PC-9 (cell line): ENCODE measurements at regions of chr14 and their contacts with region 1.

Region 1: DNA sequence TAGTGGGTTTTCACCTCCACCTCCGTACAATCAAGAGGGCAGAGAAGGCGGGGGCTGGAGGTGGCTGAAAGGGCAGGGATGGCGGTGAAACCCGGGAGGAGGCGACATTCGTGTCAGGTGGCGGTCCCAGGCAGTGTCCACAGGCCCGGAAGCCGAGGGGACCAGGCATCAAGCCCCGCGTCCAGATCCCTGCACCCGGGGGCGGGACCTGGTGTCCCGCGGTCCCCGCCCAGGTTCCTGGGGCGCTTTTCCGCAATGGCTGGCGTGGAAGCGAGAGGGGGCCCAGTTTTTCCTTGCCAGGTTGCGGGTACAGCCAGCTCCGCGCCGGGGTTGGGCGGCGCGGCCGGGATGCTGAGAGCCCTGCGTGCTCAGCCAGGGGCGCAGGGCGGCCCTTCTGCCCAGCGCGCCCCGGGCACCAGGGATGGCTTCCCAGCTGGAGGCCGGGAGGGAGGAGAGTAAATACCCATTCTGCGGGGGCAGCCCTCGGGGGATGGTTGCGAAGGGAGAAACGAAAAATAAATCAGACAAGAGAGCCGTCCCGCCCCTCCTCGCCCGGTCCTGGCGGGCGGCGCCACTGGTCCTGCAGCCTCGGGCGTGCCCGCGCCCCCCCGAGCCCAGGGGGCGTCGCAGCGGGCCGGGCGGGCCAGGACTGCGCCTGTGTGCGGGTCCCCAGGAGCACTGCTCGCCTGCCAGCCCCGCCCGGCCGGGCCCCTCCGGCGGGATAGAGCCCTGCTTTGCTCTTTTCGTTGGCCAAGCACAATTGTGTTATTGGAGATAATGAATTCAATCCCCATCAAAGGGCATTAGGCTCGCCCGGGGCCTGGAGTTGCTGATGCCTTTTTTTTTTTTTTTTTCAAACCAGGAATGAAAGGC is 11.5 kb downstream of the FOXA1 start:
- DNase-seq: peak in 1 of 2 experiments; percentile 67
- H3K4me3 ChIP-seq: peak overlapping the region; percentile 71
- H3K27ac ChIP-seq: peak overlapping the region; percentile 94
- H3K4me1 ChIP-seq: peaks cover 63% of the 10 kb centered on the region
- H3K27me3 ChIP-seq: no peaks in the 10 kb centered on the region
- CTCF ChIP-seq: no peak

Region 2: DNA sequence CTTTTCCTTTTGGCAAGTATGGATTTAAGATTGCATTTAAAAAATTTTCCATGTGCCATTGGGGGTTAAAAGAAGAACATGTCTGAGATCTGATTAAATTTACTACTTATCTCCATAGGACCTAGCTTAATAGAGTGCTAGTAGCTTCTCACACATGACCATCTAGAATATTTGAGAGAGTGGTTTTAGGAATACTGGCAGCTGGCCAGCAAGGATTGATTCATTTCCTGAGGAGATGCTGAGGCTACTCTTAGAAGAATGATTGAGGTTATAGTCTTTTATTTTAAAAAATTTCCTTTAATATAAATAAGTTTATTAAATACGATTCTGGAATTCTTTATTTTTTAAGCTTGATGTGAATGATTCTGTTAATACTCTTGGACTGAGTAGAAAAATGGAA is 329.7 kb before region 1 on chr14:
- CTCF ChIA-PET with region 1: interaction called, 7 read pairs
- POLR2A ChIA-PET with region 1: interaction called, 14 read pairs
- intact Hi-C with region 1: no loop called
- DNase-seq: peak in 1 of 2 experiments; percentile 9
- H3K4me3 ChIP-seq: no peak overlapping the region
- H3K27ac ChIP-seq: no peak overlapping the region
- H3K4me1 ChIP-seq: no peaks in the 10 kb centered on the region
- H3K27me3 ChIP-seq: no peaks in the 10 kb centered on the region
- CTCF ChIP-seq: no peak

Region 3: DNA sequence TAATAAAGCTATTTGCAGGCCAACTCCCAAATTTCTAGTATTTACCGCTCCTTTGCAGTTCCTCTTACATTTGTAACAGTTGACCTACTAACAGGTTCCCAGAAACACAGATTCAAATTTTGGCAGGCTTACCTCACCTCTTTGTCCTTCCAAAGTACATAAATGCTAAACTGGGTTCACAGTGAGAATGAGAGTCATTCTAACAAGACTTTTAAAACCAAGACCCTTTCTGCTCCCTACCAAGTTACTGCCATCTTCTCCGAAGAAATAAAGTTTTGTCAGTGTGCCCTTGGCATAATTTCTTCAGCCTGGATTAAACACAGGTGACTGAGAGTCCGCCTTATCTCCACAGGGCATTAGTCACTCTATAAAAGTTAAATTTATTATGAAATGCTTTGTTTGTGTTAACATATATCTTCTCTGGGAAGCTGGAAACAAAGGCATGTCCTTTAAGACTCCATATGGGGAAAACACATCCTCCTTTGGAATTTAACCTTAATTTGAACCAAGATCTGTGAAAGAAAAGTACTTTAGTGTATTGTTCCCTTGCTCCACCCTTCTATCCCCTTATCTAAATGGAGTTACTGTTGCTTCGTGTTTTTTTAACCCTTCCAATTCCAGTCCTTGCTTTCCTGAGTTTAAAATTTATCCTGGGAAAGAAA is 16.7 kb before region 1 on chr14:
- CTCF ChIA-PET with region 1: no interaction called
- POLR2A ChIA-PET with region 1: no interaction called
- intact Hi-C with region 1: loop called (anchors 1 kb)
- DNase-seq: peak in 1 of 2 experiments; percentile 96
- H3K4me3 ChIP-seq: peak overlapping the region; percentile 59
- H3K27ac ChIP-seq: peak overlapping the region; percentile 92
- H3K4me1 ChIP-seq: peaks cover 40% of the 10 kb centered on the region
- H3K27me3 ChIP-seq: no peaks in the 10 kb centered on the region
- CTCF ChIP-seq: no peak

Region 4: DNA sequence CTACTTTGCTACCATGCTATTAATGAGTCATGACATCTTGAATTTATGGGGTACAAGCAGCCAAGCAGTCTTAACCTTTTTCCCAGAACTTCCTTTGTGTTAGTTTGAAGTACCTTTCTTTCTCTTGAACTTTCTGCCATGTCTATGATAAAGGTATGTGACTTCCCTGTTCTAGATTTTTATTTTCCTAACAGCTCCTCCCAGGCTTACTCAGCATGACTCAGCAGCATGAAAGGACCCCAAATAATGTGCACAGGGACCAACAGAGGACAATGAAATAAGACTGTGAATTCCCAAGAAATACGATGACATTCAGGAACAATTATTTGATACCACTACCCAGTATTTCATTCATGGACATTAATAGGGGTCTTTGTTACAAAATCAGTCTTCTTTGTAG is 71.8 kb after region 1 on chr14:
- CTCF ChIA-PET with region 1: no interaction called
- POLR2A ChIA-PET with region 1: no interaction called
- intact Hi-C with region 1: no loop called
- DNase-seq: peak; percentile 5 to 35
- H3K4me3 ChIP-seq: no peak overlapping the region
- H3K27ac ChIP-seq: peak overlapping the region; percentile 37; the same call in 1 of the 2 replicates
- H3K4me1 ChIP-seq: peaks cover 13% of the 10 kb centered on the region
- H3K27me3 ChIP-seq: no peaks in the 10 kb centered on the region
- CTCF ChIP-seq: no peak